Activated CD4-positive, alpha-beta T cell treated with anti-CD3 and anti-CD28 coated beads, Interleukin-2, amount 10 ng/mL, durations not matched to agents 7 days and 5 days (primary cell): ENCODE measurements at regions of chr11 and their contacts with region 1.

Region 1: DNA sequence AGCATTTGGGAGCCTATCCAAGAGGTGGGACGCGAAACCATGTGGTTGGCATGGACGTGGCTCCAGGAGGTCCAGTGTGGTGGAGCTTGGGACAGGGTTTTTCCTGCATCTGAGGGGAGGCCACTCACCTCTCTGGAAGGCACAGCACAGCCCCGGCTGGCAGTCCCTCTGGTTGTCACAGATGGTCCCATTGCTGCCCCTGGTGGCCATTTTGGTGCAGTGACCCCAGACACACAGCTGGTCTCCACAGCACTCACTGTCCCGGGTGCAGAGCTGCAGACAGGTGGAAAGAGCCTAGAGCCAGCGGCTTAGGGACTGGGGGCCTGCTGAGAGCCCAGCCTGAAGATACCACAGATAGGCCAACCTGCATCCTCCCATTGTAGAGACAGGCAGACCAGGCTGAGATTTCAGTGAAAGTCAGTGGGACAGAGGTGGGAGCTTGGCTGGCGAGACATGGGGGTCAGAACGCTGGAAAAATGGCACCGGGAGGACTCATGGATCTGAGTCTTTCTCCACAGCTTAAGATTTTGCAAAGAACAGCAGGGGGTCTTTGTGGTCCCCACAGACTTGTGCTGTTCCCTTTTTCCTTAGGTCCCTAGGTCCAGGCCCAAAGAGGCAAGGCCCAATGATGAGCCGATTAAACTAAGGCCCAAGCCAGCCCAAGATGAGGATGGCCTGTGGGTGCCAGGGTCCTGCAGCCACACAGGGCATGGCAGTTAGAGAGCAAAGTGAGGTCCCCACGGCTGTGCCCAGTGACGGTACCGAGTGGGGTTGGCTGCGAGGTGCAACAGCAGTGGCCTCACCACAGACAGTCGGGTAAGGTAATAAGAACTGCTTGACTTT is 41.4 kb downstream of the DKK3 start:
- DNase-seq: peak; percentile 83
- H3K4me3 Mint-ChIP-seq: no peak overlapping the region
- H3K27ac Mint-ChIP-seq: peak overlapping the region; percentile 31
- H3K4me1 Mint-ChIP-seq: peaks cover 6% of the 10 kb centered on the region
- H3K27me3 Mint-ChIP-seq: peaks cover 12% of the 10 kb centered on the region

Region 2: GRCh38 chr11:11977206-11977938 is 10.3 kb after region 1 on chr11:
- CTCF ChIA-PET with region 1: interaction called, 10 read pairs
- POLR2A ChIA-PET with region 1: interaction called, 3 read pairs
- DNase-seq: no peak
- H3K4me3 Mint-ChIP-seq: no peak overlapping the region
- H3K27ac Mint-ChIP-seq: peak overlapping the region; percentile 68
- H3K4me1 Mint-ChIP-seq: peaks cover 15% of the 10 kb centered on the region
- H3K27me3 Mint-ChIP-seq: no peaks in the 10 kb centered on the region